Activated CD4-positive, alpha-beta T cell treated with anti-CD3 and anti-CD28 coated beads for 36 hours (primary cell): ENCODE measurements at regions of chrX and their contacts with region 1.

Region 1: DNA sequence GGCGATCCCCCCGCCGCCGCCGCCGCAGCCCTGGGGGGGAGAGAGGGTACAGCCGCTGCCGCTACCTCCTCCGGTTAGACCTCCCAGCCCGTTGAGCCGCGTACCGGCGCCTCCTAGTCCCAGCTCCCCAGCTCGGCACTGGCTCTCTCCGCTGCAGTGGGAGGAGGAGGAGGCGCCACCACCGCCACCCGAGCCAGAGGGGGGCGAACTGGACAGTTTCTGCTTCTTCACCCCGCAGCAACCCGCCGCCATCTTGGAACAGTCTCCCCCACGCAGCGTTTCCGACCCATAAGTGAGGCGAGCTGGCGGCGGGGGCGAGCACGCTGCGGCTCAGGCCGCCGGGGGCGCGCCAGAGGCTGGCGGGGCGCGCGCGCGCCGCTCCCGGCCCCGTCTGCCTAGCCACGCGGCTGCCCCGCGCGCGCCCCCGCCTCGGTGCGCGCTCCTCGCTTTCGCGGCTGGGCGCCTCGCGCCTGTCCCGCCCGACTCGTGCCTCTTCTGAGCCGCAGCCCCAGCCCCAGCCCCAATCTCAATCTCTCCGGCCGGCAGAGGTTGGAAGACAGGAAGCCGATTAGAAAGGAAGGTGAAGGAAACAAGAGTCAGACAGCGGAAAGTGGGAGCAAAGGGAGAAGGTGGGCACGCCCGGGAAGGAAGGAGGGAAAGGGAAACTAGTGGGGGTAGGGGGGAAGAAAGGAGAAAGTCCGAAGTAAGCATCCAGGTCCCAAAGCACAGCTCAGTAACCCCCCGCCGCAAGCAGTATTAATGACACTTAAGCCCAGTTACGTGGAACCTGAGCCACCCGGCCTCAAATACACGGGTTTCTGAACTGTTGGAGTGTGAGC is at the start of gene AMMECR1:
- DNase-seq: peak; percentile 87
- ATAC-seq: peak; percentile 79
- H3K4me3 Mint-ChIP-seq: peak within 1 kb of the TSS; percentile 88
- H3K27ac Mint-ChIP-seq: peak within 1 kb of the TSS; percentile 97
- H3K4me1 Mint-ChIP-seq: peaks cover 22% of the 10 kb centered on the region
- H3K27me3 Mint-ChIP-seq: no peaks in the 10 kb centered on the region
- total RNA-seq, gene AMMECR1: 6.9 to 7.6 TPM

Region 2: GRCh38 chrX:109536439-109537336 is 781.4 kb before region 1 on chrX and contains the start of gene NXT2:
- CTCF ChIA-PET with region 1: no interaction called
- POLR2A ChIA-PET with region 1: no interaction called
- intact Hi-C with region 1: loop called in 1 of 2 experiments (anchors 1 kb)
- DNase-seq: peak; percentile 91
- ATAC-seq: peak; percentile 98
- H3K4me3 Mint-ChIP-seq: peak within 1 kb of the TSS; percentile 89
- H3K27ac Mint-ChIP-seq: peak within 1 kb of the TSS; percentile 99
- H3K4me1 Mint-ChIP-seq: peaks cover 14% of the 10 kb centered on the region
- H3K27me3 Mint-ChIP-seq: peaks cover 5% of the 10 kb centered on the region
- total RNA-seq, gene NXT2: 10.9 to 11.6 TPM

Region 3: DNA sequence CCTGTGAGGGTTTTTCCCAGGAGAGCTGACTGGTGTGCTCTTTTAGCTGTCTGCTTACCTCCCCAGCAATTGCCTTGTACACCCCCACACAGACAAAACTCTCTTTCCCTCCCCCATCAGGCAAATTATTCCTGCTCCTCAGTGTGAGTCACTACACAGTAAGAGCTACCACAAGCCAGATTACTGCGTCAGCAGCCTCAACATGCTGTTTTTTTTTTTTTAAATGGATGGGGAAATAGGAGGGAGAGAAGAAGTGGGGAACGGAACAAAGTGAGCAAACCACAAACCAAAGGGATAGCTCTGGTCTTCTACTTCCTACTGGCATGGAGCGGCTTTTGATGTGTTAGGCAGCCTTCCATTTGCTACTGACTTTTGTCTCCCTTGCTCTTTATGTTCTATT is 477.5 kb before region 1 on chrX:
- CTCF ChIA-PET with region 1: no interaction called
- POLR2A ChIA-PET with region 1: no interaction called
- intact Hi-C with region 1: loop called in 1 of 2 experiments (anchors 2 kb)
- DNase-seq: peak; percentile 28
- ATAC-seq: peak; percentile 50
- H3K4me3 Mint-ChIP-seq: no peak overlapping the region
- H3K27ac Mint-ChIP-seq: no peak overlapping the region
- H3K4me1 Mint-ChIP-seq: peaks cover 12% of the 10 kb centered on the region
- H3K27me3 Mint-ChIP-seq: no peaks in the 10 kb centered on the region

Region 4: GRCh38 chrX:110167952-110168451 is 150.0 kb before region 1 on chrX:
- CTCF ChIA-PET with region 1: interaction called, 4 read pairs
- POLR2A ChIA-PET with region 1: no interaction called
- intact Hi-C with region 1: loop called in 1 of 2 experiments (anchors 2 kb)
- DNase-seq: peak; percentile 69
- ATAC-seq: peak; percentile 66
- H3K4me3 Mint-ChIP-seq: no peak overlapping the region
- H3K27ac Mint-ChIP-seq: no peak overlapping the region
- H3K4me1 Mint-ChIP-seq: peaks cover 5% of the 10 kb centered on the region
- H3K27me3 Mint-ChIP-seq: no peaks in the 10 kb centered on the region

Region 5: DNA sequence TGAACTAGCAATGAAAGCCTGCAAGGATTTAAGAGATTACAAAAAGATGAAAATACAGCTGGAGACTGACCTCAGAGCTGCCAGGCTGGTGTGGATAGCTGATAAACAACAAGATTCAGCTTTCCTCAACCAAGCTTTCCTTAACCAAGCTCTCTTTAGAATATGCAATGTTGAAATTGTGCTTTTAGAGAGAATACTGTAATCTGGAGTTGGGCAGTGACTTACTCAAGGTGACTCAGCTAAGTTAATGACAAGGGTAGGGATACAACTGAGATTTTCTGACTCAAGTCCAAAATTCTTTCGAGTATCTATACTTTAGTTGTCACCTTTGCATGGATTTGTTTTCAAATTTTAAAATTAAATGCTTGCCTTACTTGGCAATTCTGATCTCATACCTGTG is 98.1 kb before region 1 on chrX:
- CTCF ChIA-PET with region 1: no interaction called
- POLR2A ChIA-PET with region 1: no interaction called
- intact Hi-C with region 1: loop called in 1 of 2 experiments (anchors 10 kb)
- DNase-seq: no peak
- ATAC-seq: peak; percentile 64
- H3K4me3 Mint-ChIP-seq: no peak overlapping the region
- H3K27ac Mint-ChIP-seq: no peak overlapping the region
- H3K4me1 Mint-ChIP-seq: peaks cover 22% of the 10 kb centered on the region
- H3K27me3 Mint-ChIP-seq: no peaks in the 10 kb centered on the region

Region 6: DNA sequence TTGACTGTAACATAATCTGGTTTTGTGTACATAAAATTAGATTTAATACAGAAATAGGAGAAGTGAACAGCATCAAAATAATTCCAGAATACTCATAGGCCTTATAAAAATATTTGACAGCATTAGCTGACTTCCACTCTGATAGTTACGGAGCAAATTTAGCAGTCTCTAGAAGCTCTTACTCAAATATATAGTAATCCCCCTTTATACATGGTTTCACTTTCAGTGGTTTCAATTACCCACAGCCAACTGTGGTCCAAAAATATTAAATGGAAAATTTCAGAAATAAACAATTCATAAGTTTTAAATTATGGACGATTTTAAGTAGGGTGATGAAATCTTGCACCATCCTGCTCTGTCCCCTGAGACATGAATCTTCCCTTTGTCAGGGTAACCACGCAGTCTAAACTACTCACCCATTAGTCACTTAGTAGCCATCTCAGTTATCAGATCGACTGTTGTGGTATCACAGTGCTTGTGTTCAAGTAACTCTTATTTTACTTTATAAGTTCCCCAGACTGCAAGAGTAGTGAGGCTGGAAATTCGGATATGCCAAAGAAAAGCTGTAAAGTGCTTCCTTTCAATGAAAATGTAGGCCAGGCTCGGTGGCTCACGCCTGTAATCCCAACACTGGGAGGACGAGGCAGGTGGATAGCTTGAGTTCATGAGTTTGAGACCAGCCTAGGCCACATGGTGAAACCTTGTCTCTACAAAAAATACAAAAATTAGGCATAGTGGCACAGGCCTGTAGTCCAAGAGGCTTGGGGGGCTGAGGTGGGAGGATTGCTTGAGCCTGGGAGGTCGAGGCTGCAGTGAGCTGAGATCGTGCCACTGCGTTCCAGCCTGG is 23.4 kb after region 1 on chrX:
- CTCF ChIA-PET with region 1: no interaction called
- POLR2A ChIA-PET with region 1: no interaction called
- intact Hi-C with region 1: loop called in 1 of 2 experiments (anchors 2 kb)
- DNase-seq: no peak
- ATAC-seq: peak; percentile 90
- H3K4me3 Mint-ChIP-seq: no peak overlapping the region
- H3K27ac Mint-ChIP-seq: peak overlapping the region; percentile 70
- H3K4me1 Mint-ChIP-seq: peaks cover 1% of the 10 kb centered on the region
- H3K27me3 Mint-ChIP-seq: no peaks in the 10 kb centered on the region

Region 7: DNA sequence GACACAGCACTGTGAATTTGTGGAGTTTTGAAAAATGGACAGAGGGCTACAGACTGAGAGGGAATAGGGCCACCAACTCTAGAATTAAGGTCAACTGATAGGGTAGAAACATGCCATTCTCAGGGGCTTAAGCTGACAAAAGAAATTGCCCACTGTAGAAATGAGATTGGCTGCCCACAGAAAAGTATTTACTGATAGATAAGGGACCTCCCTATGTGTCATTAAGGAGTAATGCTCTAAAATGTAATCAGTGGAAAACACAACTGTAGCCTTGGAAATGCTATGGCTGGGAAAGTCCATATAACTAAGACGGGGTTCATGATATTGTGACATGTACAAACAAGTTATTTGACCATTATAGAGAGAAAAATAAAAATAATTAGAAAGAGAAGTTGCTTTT is 45.2 kb after region 1 on chrX:
- CTCF ChIA-PET with region 1: no interaction called
- POLR2A ChIA-PET with region 1: no interaction called
- intact Hi-C with region 1: no loop called
- DNase-seq: no peak
- ATAC-seq: no peak
- H3K4me3 Mint-ChIP-seq: no peak overlapping the region
- H3K27ac Mint-ChIP-seq: no peak overlapping the region
- H3K4me1 Mint-ChIP-seq: no peaks in the 10 kb centered on the region
- H3K27me3 Mint-ChIP-seq: no peaks in the 10 kb centered on the region